Caco-2 (cell line): ENCODE measurements at regions of chr7 and their contacts with region 1.

Region 1: DNA sequence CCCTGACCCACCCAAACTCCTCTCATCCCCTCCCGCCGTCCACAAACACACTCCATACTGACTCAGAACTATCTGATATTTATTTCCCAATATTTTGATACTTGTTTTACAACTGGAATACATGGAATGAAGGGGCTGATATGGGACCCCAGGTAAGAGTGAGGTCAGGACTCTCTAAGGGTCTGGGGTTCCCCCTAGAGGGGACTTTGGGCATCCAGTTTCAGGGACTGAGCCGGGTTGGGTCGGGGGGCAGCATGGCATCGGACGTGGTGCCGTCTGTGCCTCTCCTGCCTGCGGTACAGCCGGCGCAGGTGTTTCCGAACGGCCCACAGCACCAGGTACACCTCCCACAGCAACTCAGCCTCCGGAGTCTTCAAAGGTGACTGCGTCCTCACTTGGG is 7.5 kb downstream of the SPACDR start:
- DNase-seq: no peak
- H3K4me3 ChIP-seq: no peak overlapping the region
- H3K4me3 Mint-ChIP-seq: no peak overlapping the region
- H3K27ac Mint-ChIP-seq: no peak overlapping the region
- H3K4me1 ChIP-seq: no peaks in the 10 kb centered on the region
- H3K4me1 Mint-ChIP-seq: peaks cover 6% of the 10 kb centered on the region
- H3K27me3 ChIP-seq: no peaks in the 10 kb centered on the region
- H3K27me3 Mint-ChIP-seq: no peaks in the 10 kb centered on the region
- CTCF ChIP-seq: peak in 1 of 2 experiments; percentile 17

Region 2: DNA sequence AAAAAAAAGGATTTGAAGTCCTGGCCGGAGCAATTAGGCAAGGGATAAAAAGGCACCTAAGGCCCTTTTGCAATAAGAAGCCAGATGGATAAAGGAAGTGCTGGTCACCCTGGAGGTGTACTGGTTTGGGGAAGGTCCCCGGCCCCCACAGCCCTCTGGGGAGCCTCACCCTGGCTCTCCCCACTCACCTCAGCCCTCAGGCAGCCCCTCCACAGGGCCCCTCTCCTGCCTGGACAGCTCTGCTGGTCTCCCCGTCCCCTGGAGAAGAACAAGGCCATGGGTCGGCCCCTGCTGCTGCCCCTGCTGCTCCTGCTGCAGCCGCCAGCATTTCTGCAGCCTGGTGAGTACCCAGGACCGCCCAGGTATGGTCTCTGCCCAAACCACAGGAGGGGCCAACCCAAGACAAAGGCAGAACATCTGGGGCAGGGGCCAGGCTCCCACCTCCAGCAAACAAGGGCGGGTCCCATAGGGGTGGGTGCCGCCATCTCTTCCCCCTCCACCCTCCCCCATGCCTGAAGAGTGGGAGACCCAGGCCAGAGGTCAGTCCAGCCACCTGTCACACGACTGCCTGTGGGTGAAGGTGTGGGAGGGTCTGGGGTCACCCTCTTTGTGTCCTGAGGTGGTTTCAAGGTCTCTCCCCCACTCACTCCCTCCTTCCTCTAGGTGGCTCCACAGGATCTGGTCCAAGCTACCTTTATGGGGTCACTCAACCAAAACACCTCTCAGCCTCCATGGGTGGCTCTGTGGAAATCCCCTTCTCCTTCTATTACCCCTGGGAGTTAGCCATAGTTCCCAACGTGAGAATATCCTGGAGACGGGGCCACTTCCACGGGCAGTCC is 98.3 kb before region 1 on chr7 and contains the start of gene PILRB:
- CTCF ChIA-PET with region 1: no interaction called
- POLR2A ChIA-PET with region 1: no interaction called
- intact Hi-C with region 1: no loop called
- DNase-seq: no peak
- H3K4me3 ChIP-seq: no peak within 1 kb of the TSS
- H3K4me3 Mint-ChIP-seq: no peak within 1 kb of the TSS
- H3K27ac Mint-ChIP-seq: no peak within 1 kb of the TSS
- H3K4me1 ChIP-seq: no peaks in the 10 kb centered on the region
- H3K4me1 Mint-ChIP-seq: no peaks in the 10 kb centered on the region
- H3K27me3 ChIP-seq: no peaks in the 10 kb centered on the region
- H3K27me3 Mint-ChIP-seq: no peaks in the 10 kb centered on the region
- CTCF ChIP-seq: no peak
- total RNA-seq, gene PILRB: 53.4 and 58.9 TPM in 2 replicates

Region 3: GRCh38 chr7:100469227-100470044 is 12.9 kb after region 1 on chr7:
- CTCF ChIA-PET with region 1: interaction called, 16 read pairs
- POLR2A ChIA-PET with region 1: no interaction called
- intact Hi-C with region 1: no loop called
- DNase-seq: peak; percentile 86 to 92
- H3K4me3 ChIP-seq: no peak overlapping the region
- H3K4me3 Mint-ChIP-seq: no peak overlapping the region
- H3K27ac Mint-ChIP-seq: no peak overlapping the region
- H3K4me1 ChIP-seq: peaks cover 4% of the 10 kb centered on the region; the same call in 1 of the 2 replicates
- H3K4me1 Mint-ChIP-seq: no peaks in the 10 kb centered on the region
- H3K27me3 ChIP-seq: no peaks in the 10 kb centered on the region
- H3K27me3 Mint-ChIP-seq: no peaks in the 10 kb centered on the region
- CTCF ChIP-seq: peak; percentile 97 to 98

Region 4: DNA sequence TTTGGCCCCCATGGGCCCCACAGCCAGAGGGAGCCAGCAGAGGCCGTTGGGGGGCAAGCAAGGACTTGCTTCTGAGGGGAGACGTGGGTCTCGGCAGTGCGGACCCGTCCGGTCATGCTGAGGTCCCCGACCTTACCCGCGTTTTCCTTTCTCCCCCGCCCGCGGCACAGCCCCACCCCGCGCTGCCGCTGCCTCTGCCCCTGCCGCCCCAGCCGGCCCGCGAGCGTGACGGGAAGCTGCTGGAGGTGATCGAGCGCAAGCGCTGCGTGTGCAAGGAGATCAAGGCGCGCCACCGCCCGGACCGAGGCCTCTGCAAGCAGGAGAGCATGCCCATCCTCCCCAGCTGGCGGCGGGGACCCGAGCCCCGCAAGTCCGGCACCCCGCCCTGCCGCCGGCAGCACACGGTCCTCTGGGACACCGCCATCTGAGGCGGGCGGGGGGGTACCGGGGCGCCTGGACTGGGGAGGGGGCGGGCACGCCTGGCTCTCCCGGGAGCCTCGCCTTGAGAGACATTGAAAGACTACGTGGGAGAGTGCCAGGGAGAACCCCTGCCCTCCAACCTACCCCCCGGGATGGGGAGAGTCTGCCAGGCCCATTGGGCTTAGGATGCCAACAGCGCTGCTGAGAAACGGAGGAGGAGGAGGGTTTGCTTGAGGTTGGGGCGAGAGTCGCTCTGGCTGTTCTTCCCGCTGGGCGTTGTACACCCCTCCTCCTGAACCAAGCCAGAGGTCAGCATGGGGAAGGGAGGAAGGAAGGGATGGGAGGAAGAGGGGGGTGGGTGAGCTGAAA is 37.1 kb after region 1 on chr7:
- CTCF ChIA-PET with region 1: no interaction called
- POLR2A ChIA-PET with region 1: interaction called, 11 read pairs
- intact Hi-C with region 1: no loop called
- DNase-seq: peak in 1 of 2 experiments; percentile 41
- H3K4me3 ChIP-seq: peak overlapping the region; percentile 41
- H3K4me3 Mint-ChIP-seq: peak overlapping the region; percentile 24
- H3K27ac Mint-ChIP-seq: peak overlapping the region; percentile 31
- H3K4me1 ChIP-seq: no peaks in the 10 kb centered on the region
- H3K4me1 Mint-ChIP-seq: no peaks in the 10 kb centered on the region
- H3K27me3 ChIP-seq: no peaks in the 10 kb centered on the region
- H3K27me3 Mint-ChIP-seq: no peaks in the 10 kb centered on the region
- CTCF ChIP-seq: no peak

Region 5: GRCh38 chr7:100763556-100764140 is 307.1 kb after region 1 on chr7:
- CTCF ChIA-PET with region 1: no interaction called
- POLR2A ChIA-PET with region 1: no interaction called
- intact Hi-C with region 1: no loop called
- DNase-seq: no peak
- H3K4me3 ChIP-seq: no peak overlapping the region
- H3K4me3 Mint-ChIP-seq: no peak overlapping the region
- H3K27ac Mint-ChIP-seq: no peak overlapping the region
- H3K4me1 ChIP-seq: peaks cover 5% of the 10 kb centered on the region; the same call in 1 of the 2 replicates
- H3K4me1 Mint-ChIP-seq: no peaks in the 10 kb centered on the region
- H3K27me3 ChIP-seq: no peaks in the 10 kb centered on the region
- H3K27me3 Mint-ChIP-seq: no peaks in the 10 kb centered on the region
- CTCF ChIP-seq: no peak

Region 6: DNA sequence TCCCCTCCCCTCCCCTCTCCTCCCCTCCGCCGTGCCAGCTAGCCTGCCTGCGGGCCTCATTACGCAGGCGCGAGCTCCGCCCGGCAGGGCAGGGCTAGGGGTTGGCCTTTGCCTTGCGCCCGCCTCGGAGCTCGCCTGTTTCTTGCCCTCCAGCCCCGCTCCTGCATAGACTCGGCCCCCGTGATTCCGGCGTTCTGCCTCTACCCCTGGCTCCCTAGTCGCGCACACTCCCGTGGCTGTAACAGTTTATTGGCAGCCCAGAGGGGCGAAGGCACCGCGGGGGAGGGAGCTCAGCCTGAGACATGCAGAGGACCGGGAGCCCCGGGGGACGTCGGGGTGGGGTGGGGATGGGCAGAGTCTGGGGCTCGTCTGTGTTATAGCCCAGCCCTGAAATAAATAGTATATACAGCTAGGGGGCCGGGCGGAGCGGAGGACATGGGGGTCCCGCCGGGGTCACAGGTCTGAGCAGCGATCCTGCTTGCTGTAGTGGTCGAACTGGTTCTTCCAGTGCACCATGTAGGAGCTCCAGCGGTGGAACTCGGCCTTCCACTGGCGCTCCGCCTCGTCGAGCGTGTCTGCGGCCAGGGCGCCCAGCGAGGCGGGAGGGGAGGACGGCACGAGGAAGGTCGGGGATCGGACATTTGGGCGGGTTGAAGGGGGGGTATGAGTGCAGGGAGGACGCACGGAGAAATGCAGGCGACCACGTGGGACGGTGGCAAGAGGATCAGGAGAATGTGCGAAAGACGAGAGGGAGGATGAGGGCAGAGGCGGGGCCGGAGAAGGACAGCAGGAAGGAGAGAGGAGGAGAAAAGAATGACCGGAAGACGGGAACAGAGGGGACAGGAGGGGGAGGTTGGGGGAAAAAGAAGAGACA is 433.4 kb after region 1 on chr7:
- CTCF ChIA-PET with region 1: no interaction called
- POLR2A ChIA-PET with region 1: no interaction called
- intact Hi-C with region 1: no loop called
- DNase-seq: peak; percentile 94 to 96
- H3K4me3 ChIP-seq: peak overlapping the region; percentile 67
- H3K4me3 Mint-ChIP-seq: peak overlapping the region; percentile 88
- H3K27ac Mint-ChIP-seq: peak overlapping the region; percentile 87
- H3K4me1 ChIP-seq: peaks cover 29% of the 10 kb centered on the region
- H3K4me1 Mint-ChIP-seq: peaks cover 50% of the 10 kb centered on the region
- H3K27me3 ChIP-seq: no peaks in the 10 kb centered on the region
- H3K27me3 Mint-ChIP-seq: no peaks in the 10 kb centered on the region
- CTCF ChIP-seq: no peak